K562 (cell line): ENCODE measurements at regions of chr1 and their contacts with region 1.

Region 1: GRCh38 chr1:16009030-16009709 is 5.1 kb downstream of the SRARP start:
- DNase-seq: peak; percentile 83 to 92 (median 85)
- ATAC-seq: peak; percentile 72
- H3K4me3 ChIP-seq: no peak overlapping the region
- H3K27ac ChIP-seq: no peak overlapping the region; the same call in 2 of the 3 replicates
- H3K4me1 ChIP-seq: peaks cover 29 to 34% of the 10 kb centered on the region in 2 experiments
- H3K27me3 ChIP-seq: peaks cover 0 to 3% of the 10 kb centered on the region in 2 experiments; a peak in 1 of 5 replicates
- CTCF ChIP-seq: peak; percentile 96 to 99 (median 98)
- EP300 ChIP-seq: 0 out of 2 replicates have a peak, but pooled peaks have one; percentile 16
- POLR2A ChIP-seq: no peak
- RAD21 ChIP-seq: peak; percentile 98 to 100

Region 2: GRCh38 chr1:15788624-15789301 is 220.4 kb before region 1 on chr1:
- CTCF ChIA-PET with region 1: interaction called, 3 read pairs
- POLR2A ChIA-PET with region 1: no interaction called
- in situ Hi-C with region 1: no loop called
- intact Hi-C with region 1: loop called (anchors 1 kb)
- DNase-seq: peak in 2 of 4 experiments; percentile 22 to 60
- ATAC-seq: peak; percentile 11; the same call in 1 of the 3 replicates
- H3K4me3 ChIP-seq: no peak overlapping the region
- H3K27ac ChIP-seq: peak overlapping the region; percentile 31; the same call in 1 of the 3 replicates
- H3K4me1 ChIP-seq: peaks cover 11 to 19% of the 10 kb centered on the region in 2 experiments; a peak in 4 of 5 replicates
- H3K27me3 ChIP-seq: peaks cover 0 to 8% of the 10 kb centered on the region in 2 experiments; a peak in 2 of 5 replicates
- CTCF ChIP-seq: no peak
- EP300 ChIP-seq: no peak
- POLR2A ChIP-seq: no peak
- RAD21 ChIP-seq: no peak

Region 3: DNA sequence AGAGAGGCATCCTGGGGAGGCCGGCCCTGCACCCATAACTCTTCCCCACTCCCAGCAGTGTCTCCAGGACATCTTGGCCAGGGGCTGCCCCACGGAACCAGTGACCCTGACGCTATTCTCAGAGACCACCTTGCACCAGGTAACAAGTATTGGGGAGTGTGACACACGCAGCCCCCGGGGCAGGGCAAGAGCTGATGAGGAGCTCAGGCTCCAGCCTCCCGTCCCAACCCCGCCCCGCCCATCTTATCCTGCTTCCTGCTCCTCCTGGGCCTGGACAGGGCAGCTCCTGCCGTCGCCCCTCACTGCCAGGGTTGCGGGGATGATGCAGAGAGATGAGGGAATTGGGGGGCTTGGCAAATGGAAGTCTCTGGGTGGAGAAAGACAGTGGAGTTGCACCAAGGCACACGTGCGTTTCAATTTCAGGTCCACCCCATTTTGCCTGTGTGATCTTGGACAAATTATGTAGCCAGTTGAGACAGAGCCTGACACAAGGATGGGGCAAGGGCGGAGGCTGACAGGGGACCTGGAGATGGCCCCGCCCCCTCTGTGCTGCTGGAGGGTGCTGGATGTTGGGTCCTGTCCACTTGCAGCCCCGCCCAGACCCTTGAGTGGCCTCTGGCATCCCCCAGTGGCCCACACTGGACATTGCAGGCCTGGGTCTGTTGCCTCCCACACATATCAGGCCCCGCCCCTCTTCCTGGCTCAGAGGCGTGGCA is 23.4 kb after region 1 on chr1:
- CTCF ChIA-PET with region 1: interaction called, 50 read pairs
- POLR2A ChIA-PET with region 1: no interaction called
- in situ Hi-C with region 1: no loop called
- intact Hi-C with region 1: loop called (anchors 1 kb)
- DNase-seq: peak; percentile 97 to 98 (median 98)
- ATAC-seq: peak; percentile 99
- H3K4me3 ChIP-seq: no peak overlapping the region
- H3K27ac ChIP-seq: no peak overlapping the region
- H3K4me1 ChIP-seq: peaks cover 4 to 42% of the 10 kb centered on the region in 2 experiments; a peak in 4 of 5 replicates
- H3K27me3 ChIP-seq: no peaks in the 10 kb centered on the region
- CTCF ChIP-seq: peak; percentile 98 to 99 (median 99)
- EP300 ChIP-seq: peak; percentile 47; the same call in 1 of the 2 replicates
- POLR2A ChIP-seq: no peak
- RAD21 ChIP-seq: peak; percentile 99 to 100

Region 4: GRCh38 chr1:16055613-16056520 is 46.7 kb after region 1 on chr1:
- CTCF ChIA-PET with region 1: interaction called, 53 read pairs
- POLR2A ChIA-PET with region 1: interaction called, 6 read pairs
- in situ Hi-C with region 1: loop called (anchors 10 kb)
- intact Hi-C with region 1: loop called (anchors 1 kb)
- DNase-seq: peak; percentile 96 to 98 (median 97)
- ATAC-seq: peak; percentile 92
- H3K4me3 ChIP-seq: no peak overlapping the region
- H3K27ac ChIP-seq: peak overlapping the region; percentile 82
- H3K4me1 ChIP-seq: peaks cover 32 to 44% of the 10 kb centered on the region in 2 experiments; a peak in 4 of 5 replicates
- H3K27me3 ChIP-seq: no peaks in the 10 kb centered on the region; a peak in 1 of 5 replicates
- CTCF ChIP-seq: peak; percentile 97 to 99 (median 99)
- EP300 ChIP-seq: peak; percentile 44
- POLR2A ChIP-seq: no peak; the same call in 1 of the 2 replicates
- RAD21 ChIP-seq: peak; percentile 95 to 99

Region 5: GRCh38 chr1:16067127-16067768 is 58.1 kb after region 1 on chr1:
- CTCF ChIA-PET with region 1: interaction called, 3 read pairs
- POLR2A ChIA-PET with region 1: interaction called, 3 read pairs
- in situ Hi-C with region 1: loop called (anchors 10 kb)
- intact Hi-C with region 1: loop called (anchors 5 kb)
- DNase-seq: peak in 3 of 4 experiments; percentile 43 to 58 (median 49)
- ATAC-seq: peak; percentile 54
- H3K4me3 ChIP-seq: no peak overlapping the region
- H3K27ac ChIP-seq: no peak overlapping the region
- H3K4me1 ChIP-seq: peaks cover 2 to 22% of the 10 kb centered on the region in 2 experiments; a peak in 3 of 5 replicates
- H3K27me3 ChIP-seq: peaks cover 17 to 72% of the 10 kb centered on the region in 2 experiments
- CTCF ChIP-seq: no peak
- EP300 ChIP-seq: no peak
- POLR2A ChIP-seq: no peak
- RAD21 ChIP-seq: no peak

Region 6: DNA sequence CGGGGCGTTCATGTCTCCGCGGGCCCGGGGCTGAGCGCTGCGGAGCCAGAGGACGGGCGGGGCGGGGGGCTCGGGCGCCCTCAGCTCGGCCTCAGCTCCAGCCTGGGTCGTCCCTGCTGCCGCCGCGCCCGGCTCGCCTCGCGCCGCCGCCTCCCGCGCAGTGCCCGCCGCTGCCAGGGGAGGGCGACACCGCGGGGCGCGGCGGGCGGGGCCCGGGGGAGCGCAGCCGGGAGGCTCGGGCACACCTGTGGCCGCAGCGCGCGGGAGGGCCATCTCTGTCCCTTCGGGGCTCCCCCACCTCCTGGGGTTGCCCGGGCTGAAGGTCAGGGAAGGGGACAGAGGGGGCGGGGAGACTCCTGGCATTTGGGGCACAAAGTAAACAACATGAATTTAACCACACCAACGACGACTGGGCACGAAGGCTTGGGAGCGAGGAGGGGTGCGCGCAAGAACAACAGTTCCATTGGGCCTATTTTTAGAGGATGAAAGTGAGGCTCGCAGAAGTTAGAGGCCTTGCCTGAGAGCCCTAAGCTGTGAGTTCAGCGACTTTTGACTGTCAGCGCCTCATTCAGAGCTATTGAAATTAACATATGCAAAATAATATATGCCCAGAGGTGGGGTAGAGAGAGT is 64.4 kb after region 1 on chr1 and contains the start of gene FAM131C:
- CTCF ChIA-PET with region 1: interaction called, 3 read pairs
- POLR2A ChIA-PET with region 1: interaction called, 3 read pairs
- in situ Hi-C with region 1: loop called (anchors 10 kb)
- intact Hi-C with region 1: loop called (anchors 5 kb)
- DNase-seq: peak in 3 of 4 experiments; percentile 80 to 92 (median 91)
- ATAC-seq: peak; percentile 77
- H3K4me3 ChIP-seq: peak within 1 kb of the TSS; percentile 41
- H3K27ac ChIP-seq: no peak within 1 kb of the TSS
- H3K4me1 ChIP-seq: peaks cover 15 to 32% of the 10 kb centered on the region in 2 experiments; a peak in 4 of 5 replicates
- H3K27me3 ChIP-seq: peaks cover 6 to 21% of the 10 kb centered on the region in 2 experiments
- CTCF ChIP-seq: peak; percentile 14 to 62 (median 53); a peak in 3 of 6 replicates
- EP300 ChIP-seq: no peak
- POLR2A ChIP-seq: peak; percentile 60
- RAD21 ChIP-seq: peak in 1 of 2 experiments; percentile 37; a peak in 2 of 4 replicates
- polyA plus RNA-seq, gene FAM131C: not detected

Region 7: DNA sequence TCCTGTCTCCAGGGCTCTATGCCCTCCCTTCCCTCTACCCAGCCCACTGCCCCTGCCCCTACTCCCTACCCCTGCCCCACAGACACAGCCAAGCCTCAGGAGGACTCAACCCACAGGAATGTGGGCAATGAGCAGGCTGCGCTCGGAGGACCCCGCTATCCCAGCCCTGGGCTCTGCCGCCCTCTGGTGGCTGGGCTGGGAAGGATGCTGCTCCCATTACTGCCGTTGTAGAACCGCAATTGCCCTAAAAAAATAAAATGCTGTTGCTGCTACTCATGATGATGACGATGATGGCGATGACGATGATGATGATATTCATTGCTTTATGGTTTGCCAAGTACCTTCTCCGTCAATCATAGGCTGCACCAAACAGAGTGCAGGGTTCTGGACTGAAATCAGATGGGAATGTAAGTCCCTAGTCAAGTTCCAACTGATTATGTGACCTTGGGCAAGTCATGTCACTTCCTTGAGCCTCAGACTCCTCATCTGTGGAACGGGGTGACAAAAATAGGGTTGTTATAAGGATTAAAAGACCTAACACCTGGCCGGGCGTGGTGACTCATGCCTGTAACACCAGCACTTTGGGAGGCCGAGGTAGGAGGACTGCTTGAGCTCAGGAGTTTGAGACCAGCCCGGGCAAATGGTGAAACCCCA is 178.7 kb after region 1 on chr1:
- CTCF ChIA-PET with region 1: interaction called, 14 read pairs
- POLR2A ChIA-PET with region 1: no interaction called
- in situ Hi-C with region 1: loop called (anchors 5 kb)
- intact Hi-C with region 1: loop called (anchors 2 kb)
- DNase-seq: peak; percentile 88 to 95 (median 92)
- ATAC-seq: peak; percentile 94
- H3K4me3 ChIP-seq: no peak overlapping the region
- H3K27ac ChIP-seq: no peak overlapping the region
- H3K4me1 ChIP-seq: peaks cover 6 to 28% of the 10 kb centered on the region in 2 experiments; a peak in 4 of 5 replicates
- H3K27me3 ChIP-seq: no peaks in the 10 kb centered on the region
- CTCF ChIP-seq: peak; percentile 98 to 99 (median 99)
- EP300 ChIP-seq: no peak
- POLR2A ChIP-seq: no peak
- RAD21 ChIP-seq: peak; percentile 100